ENCODE measurements at regions of chr6 and their contacts with region 1.

Region 1: DNA sequence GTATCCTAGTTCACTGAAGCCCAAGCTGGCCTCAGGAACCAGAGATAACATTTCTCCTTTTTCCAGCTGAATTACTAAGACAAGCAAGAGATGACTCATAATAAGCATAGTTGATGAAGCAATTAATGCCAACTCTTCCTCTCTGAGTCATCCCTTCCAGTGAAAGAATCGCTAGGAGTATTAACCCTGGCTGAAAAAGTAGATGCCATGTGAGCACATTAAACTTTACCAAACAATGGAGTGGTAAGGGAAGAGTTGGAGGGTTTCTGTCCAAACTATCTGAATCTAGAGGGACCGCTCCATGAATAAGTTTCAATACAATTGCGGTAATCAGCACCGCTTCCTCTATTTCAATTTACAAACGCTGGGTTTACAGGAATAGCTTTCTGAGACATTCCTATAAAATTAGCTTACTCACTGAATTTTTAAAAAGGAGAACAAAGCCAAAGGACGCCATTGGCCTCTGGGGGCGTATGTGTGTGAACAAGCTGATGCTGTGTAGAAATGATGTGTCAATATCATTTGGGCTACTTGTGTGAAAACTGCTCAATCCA is 48.3 kb downstream of the ATXN1 start:
- DNase-seq: peak; percentile 59
- ATAC-seq: peak; percentile 47
- H3K4me3 Mint-ChIP-seq: peak overlapping the region; percentile 74
- H3K27ac Mint-ChIP-seq: peak overlapping the region; percentile 91
- H3K4me1 Mint-ChIP-seq: peaks cover 58% of the 10 kb centered on the region
- H3K27me3 Mint-ChIP-seq: no peaks in the 10 kb centered on the region

Region 2: GRCh38 chr6:16069222-16069621 is 643.8 kb before region 1 on chr6:
- CTCF ChIA-PET with region 1: no interaction called
- DNase-seq: no peak
- ATAC-seq: no peak
- H3K4me3 Mint-ChIP-seq: no peak overlapping the region
- H3K27ac Mint-ChIP-seq: no peak overlapping the region
- H3K4me1 Mint-ChIP-seq: no peaks in the 10 kb centered on the region
- H3K27me3 Mint-ChIP-seq: peaks cover 12% of the 10 kb centered on the region

Region 3: GRCh38 chr6:16635810-16636602 is 77.0 kb before region 1 on chr6:
- CTCF ChIA-PET with region 1: no interaction called
- DNase-seq: no peak
- ATAC-seq: no peak
- H3K4me3 Mint-ChIP-seq: no peak overlapping the region
- H3K27ac Mint-ChIP-seq: peak overlapping the region; percentile 61
- H3K4me1 Mint-ChIP-seq: peaks cover 53% of the 10 kb centered on the region
- H3K27me3 Mint-ChIP-seq: no peaks in the 10 kb centered on the region

Region 4: GRCh38 chr6:16725145-16725864 is 12.3 kb after region 1 on chr6:
- CTCF ChIA-PET with region 1: interaction called, 29 read pairs
- DNase-seq: no peak
- ATAC-seq: no peak
- H3K4me3 Mint-ChIP-seq: no peak overlapping the region
- H3K27ac Mint-ChIP-seq: no peak overlapping the region
- H3K4me1 Mint-ChIP-seq: peaks cover 48% of the 10 kb centered on the region
- H3K27me3 Mint-ChIP-seq: no peaks in the 10 kb centered on the region

Region 5: DNA sequence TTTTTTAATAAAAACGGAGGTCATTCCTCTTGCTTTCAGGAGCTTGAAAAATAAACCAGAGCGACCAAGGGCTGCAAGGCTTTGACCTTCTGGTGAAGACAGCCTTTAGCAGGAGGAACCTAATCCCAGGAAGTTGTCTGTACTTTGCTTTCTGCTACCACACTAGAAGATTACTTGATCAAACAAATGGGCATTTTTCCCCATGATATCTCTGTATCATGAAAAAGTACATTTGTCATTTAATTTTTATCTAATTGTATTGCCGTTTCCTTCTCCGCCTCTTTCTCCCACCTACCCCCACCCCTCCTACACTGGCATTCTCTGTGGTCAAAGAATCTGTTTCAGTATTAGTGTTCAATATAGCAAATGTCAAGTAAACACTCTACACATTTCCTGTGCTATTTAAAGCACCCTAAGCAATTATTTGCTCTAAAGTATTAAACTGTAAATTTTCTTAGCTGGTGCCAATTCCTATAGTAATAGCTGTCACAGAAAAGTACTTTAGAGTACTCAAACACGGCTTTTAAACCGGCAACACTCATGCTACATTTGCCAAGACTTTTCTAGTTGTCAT is 18.6 kb after region 1 on chr6:
- CTCF ChIA-PET with region 1: interaction called, 29 read pairs
- DNase-seq: peak; percentile 76
- ATAC-seq: peak; percentile 85
- H3K4me3 Mint-ChIP-seq: peak overlapping the region; percentile 74
- H3K27ac Mint-ChIP-seq: peak overlapping the region; percentile 94
- H3K4me1 Mint-ChIP-seq: peaks cover 70% of the 10 kb centered on the region
- H3K27me3 Mint-ChIP-seq: no peaks in the 10 kb centered on the region

Measured in activated CD8-positive, alpha-beta memory T cell treated with anti-CD3 and anti-CD28 coated beads, Interleukin-2, amount 10 ng/mL, durations not matched to agents 7 days and 5 days (primary cell).